ENCODE measurements at regions of chr16 and their contacts with region 1.

Region 1: GRCh38 chr16:67521095-67521804 is 7.4 kb upstream of the RIPOR1 start:
- DNase-seq: peak; percentile 91 to 98 (median 96)
- H3K4me3 ChIP-seq: peak overlapping the region; percentile 91
- H3K4me3 Mint-ChIP-seq: peak overlapping the region; percentile 90 to 97 (median 93)
- H3K27ac ChIP-seq: peak overlapping the region; percentile 86
- H3K27ac Mint-ChIP-seq: peak overlapping the region; percentile 97 to 100 (median 99)
- H3K4me1 ChIP-seq: peaks cover 11% of the 10 kb centered on the region
- H3K4me1 Mint-ChIP-seq: peaks cover 16 to 18% (median 17%) of the 10 kb centered on the region in 3 donors
- H3K27me3 ChIP-seq: no peaks in the 10 kb centered on the region
- H3K27me3 Mint-ChIP-seq: peaks cover 0 to 4% of the 10 kb centered on the region in 2 donors

Region 2: GRCh38 chr16:67480833-67481560 is 40.3 kb before region 1 on chr16 and contains the start of gene ATP6V0D1:
- CTCF ChIA-PET with region 1: interaction called, 94 read pairs
- POLR2A ChIA-PET with region 1: interaction called, 8 read pairs
- DNase-seq: peak; percentile 98 to 99 (median 99)
- H3K4me3 ChIP-seq: peak within 1 kb of the TSS; percentile 96
- H3K4me3 Mint-ChIP-seq: peak within 1 kb of the TSS; percentile 96 to 100 (median 100)
- H3K27ac ChIP-seq: peak within 1 kb of the TSS; percentile 98
- H3K27ac Mint-ChIP-seq: peak within 1 kb of the TSS; percentile 96 to 100 (median 99)
- H3K4me1 ChIP-seq: peaks cover 28% of the 10 kb centered on the region
- H3K4me1 Mint-ChIP-seq: peaks cover 45 to 72% (median 47%) of the 10 kb centered on the region in 3 donors
- H3K27me3 ChIP-seq: no peaks in the 10 kb centered on the region
- H3K27me3 Mint-ChIP-seq: peaks cover 0 to 2% of the 10 kb centered on the region in 2 donors
- total RNA-seq, gene ATP6V0D1: 49.3 to 57.6 TPM

Region 3: DNA sequence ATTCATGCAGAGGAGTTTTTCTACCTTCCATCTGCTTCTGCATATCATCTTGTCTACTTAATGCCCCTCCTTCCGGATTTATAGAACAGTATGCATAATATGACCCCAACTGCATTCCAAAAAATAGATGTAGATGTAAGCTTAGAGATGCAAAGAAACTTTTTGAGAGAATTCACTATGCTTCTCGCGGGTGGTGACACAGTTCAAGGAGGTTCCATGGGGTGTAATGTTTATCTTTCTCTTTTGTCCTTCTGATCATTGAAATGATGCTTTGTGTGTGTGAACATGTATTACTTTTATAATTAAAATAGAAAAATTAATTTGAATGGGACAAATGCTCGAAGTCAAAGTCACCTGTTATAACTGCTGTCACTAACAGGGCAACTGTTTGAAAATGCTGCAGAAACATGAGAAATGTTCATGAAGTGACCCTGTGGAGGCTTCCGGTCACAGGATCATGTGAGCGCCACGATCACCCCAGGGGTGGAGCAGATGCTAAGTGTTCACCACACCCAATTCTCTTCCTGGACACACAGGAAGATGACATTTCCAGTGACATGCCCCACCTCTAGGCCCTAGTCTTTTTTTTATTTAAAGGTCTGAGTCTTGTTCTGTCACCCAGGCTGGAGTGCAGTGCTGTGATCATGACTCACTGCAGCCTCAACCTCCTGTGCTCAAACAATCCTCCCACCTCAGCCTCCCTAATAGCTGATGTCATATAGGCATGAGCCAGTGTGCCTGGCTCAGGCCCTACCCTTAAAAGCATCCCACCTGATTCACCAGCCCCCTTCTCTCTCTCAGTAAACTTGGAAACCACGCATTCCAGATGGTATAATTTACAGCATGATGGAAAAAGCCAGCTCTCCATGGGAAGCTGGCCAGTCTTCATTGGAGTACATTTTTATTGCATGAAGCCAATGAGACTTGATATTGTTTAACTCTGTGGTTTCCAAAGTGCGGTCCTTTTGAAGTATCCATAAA is 16.9 kb before region 1 on chr16:
- CTCF ChIA-PET with region 1: interaction called, 87 read pairs
- POLR2A ChIA-PET with region 1: interaction called, 4 read pairs
- DNase-seq: peak in 4 of 5 donors; percentile 29 to 56 (median 44)
- H3K4me3 ChIP-seq: peak overlapping the region; percentile 28
- H3K4me3 Mint-ChIP-seq: peak overlapping the region in 6 of 7 donors; percentile 56 to 77 (median 68)
- H3K27ac ChIP-seq: peak overlapping the region; percentile 21
- H3K27ac Mint-ChIP-seq: peak overlapping the region; percentile 83 to 98 (median 94)
- H3K4me1 ChIP-seq: peaks cover 59% of the 10 kb centered on the region
- H3K4me1 Mint-ChIP-seq: peaks cover 47 to 53% (median 49%) of the 10 kb centered on the region in 3 donors
- H3K27me3 ChIP-seq: no peaks in the 10 kb centered on the region
- H3K27me3 Mint-ChIP-seq: no peaks in the 10 kb centered on the region

Region 4: GRCh38 chr16:67561824-67562525 is 40.7 kb after region 1 on chr16:
- CTCF ChIA-PET with region 1: interaction called, 47 read pairs
- POLR2A ChIA-PET with region 1: interaction called, 8 read pairs
- DNase-seq: peak; percentile 95 to 98 (median 96)
- H3K4me3 ChIP-seq: peak overlapping the region; percentile 67
- H3K4me3 Mint-ChIP-seq: peak overlapping the region; percentile 87 to 98 (median 91)
- H3K27ac ChIP-seq: peak overlapping the region; percentile 78
- H3K27ac Mint-ChIP-seq: peak overlapping the region; percentile 85 to 96 (median 93)
- H3K4me1 ChIP-seq: peaks cover 32% of the 10 kb centered on the region
- H3K4me1 Mint-ChIP-seq: peaks cover 35 to 60% (median 48%) of the 10 kb centered on the region in 3 donors
- H3K27me3 ChIP-seq: no peaks in the 10 kb centered on the region
- H3K27me3 Mint-ChIP-seq: no peaks in the 10 kb centered on the region

Region 5: DNA sequence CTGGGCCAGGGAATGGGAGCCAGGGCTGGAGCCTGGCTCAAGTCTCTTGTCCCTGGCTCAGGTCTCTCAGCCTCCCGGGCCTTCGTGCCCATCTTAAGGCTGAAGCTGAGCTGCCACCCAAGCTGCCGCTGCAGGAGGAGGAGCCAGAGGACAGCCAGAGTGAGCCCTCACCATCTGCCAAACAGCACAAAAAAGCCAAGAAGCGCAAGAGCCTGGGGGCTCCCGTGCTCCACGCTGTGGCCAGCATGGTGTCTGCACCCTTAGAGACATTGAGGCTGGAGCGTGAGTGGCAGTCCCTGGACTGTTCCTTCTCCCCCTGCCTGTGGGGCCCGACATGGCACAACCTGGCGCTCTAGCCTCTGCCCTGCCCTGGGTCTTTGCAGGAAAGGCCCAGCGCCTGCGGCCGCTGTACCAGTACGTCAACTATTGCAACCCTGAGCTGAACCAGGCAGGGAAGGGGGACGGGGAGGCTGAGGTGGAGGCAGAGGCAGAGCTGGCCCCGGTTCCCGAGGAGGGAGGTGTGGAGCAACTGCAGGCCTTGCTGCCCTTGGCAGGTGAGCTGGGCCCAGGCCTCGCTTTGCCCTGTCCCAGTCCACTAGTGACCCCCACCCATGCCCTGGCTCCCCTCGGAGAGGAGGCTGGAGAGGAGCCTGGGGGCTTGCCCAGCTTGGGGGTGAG is 146.7 kb after region 1 on chr16:
- CTCF ChIA-PET with region 1: interaction called, 95 read pairs
- POLR2A ChIA-PET with region 1: no interaction called
- DNase-seq: peak; percentile 48 to 86 (median 74)
- H3K4me3 ChIP-seq: no peak overlapping the region
- H3K4me3 Mint-ChIP-seq: peak overlapping the region; percentile 19 to 94 (median 71)
- H3K27ac ChIP-seq: no peak overlapping the region
- H3K27ac Mint-ChIP-seq: peak overlapping the region in 5 of 8 donors; percentile 6 to 80 (median 42)
- H3K4me1 ChIP-seq: peaks cover 17% of the 10 kb centered on the region
- H3K4me1 Mint-ChIP-seq: peaks cover 7 to 27% (median 12%) of the 10 kb centered on the region in 3 donors
- H3K27me3 ChIP-seq: no peaks in the 10 kb centered on the region
- H3K27me3 Mint-ChIP-seq: no peaks in the 10 kb centered on the region

Region 6: DNA sequence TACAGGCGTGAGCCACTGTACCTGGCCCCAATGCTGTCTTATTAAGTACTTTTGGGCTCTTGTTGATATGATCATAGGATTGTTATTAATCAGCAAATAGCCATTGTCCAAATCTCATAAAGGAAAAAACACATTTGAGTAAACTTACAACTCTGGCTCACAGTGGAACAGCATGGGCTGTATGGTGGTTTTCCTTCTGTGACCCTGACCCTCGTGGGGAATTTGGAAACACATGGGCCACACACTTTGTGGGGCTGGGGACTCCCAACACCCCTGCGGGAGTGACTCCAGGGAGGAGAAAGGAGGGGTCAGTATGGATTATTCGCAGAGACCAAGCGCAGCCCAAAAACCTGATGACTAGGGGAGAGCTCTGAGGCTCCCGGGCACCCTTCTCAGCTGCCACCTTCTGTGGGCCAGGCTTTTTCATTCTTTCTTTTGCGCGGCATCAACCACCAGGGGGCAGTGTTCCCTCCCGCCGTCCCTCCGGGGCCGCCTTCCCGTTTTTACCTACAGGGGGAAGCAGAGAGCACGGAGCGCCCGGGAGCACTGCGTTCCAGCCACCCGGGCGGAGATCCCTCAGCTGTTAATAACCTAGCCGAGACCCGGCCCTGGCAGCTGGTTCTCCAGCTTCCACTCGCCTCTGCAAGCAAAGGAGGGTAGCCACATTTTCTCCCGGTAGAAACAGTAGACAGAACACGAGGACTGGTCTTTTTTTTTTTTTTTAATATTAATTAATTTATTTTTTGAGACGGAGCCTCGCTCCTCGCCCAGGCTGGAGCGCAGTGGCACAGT is 295.2 kb after region 1 on chr16:
- CTCF ChIA-PET with region 1: interaction called, 13 read pairs
- POLR2A ChIA-PET with region 1: interaction called, 3 read pairs
- DNase-seq: peak; percentile 81 to 89 (median 85)
- H3K4me3 ChIP-seq: no peak overlapping the region
- H3K4me3 Mint-ChIP-seq: peak overlapping the region in 2 of 7 donors; percentile 21 to 59
- H3K27ac ChIP-seq: no peak overlapping the region
- H3K27ac Mint-ChIP-seq: peak overlapping the region in 6 of 8 donors; percentile 27 to 61 (median 54)
- H3K4me1 ChIP-seq: no peaks in the 10 kb centered on the region
- H3K4me1 Mint-ChIP-seq: peaks cover 2 to 7% (median 6%) of the 10 kb centered on the region in 3 donors
- H3K27me3 ChIP-seq: no peaks in the 10 kb centered on the region
- H3K27me3 Mint-ChIP-seq: no peaks in the 10 kb centered on the region